HCT116 (cell line): ENCODE measurements at regions of chr17 and their contacts with region 1.

Region 1: GRCh38 chr17:6843241-6843880 is 11.8 kb upstream of the TEKT1 start:
- DNase-seq: peak; percentile 48
- ATAC-seq: peak; percentile 80
- H3K4me3 ChIP-seq: no peak overlapping the region
- H3K27ac ChIP-seq: no peak overlapping the region
- H3K4me1 ChIP-seq: 0 out of 4 replicates have a peak, but pooled peaks cover 0 to 3% of the 10 kb centered on the region in 2 experiments
- H3K27me3 ChIP-seq: no peaks in the 10 kb centered on the region
- CTCF ChIP-seq: peak; percentile 24 to 83 (median 58); a peak in 5 of 6 replicates
- POLR2A ChIP-seq: no peak
- RAD21 ChIP-seq: peak; percentile 80

Region 2: DNA sequence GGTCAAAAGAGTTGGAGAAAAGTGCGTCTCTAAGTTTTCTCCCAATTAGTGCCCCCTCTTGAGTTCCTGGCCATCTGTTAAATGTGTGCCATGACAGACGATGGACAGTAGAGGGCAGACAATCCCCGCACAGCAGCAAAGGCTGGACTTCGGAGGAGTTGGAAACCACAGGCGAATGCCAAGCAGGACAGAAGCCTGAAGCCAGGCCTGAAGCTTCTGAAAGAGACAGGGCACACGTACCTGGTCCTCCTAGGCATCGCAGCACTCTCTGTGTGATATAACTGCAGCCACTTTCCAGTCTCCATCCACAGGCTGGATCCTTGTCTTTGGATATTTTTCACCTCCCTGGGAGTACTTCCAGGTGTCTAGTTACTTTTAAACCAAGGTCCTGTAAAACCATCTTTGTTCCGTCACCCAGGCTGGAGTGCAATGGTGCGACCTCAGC is 177.3 kb before region 1 on chr17:
- CTCF ChIA-PET with region 1: interaction called, 21 read pairs
- POLR2A ChIA-PET with region 1: interaction called, 8 read pairs
- RAD21 ChIA-PET with region 1: no interaction called
- intact Hi-C with region 1: loop called (anchors 1 kb)
- DNase-seq: peak; percentile 81
- ATAC-seq: peak; percentile 82
- H3K4me3 ChIP-seq: no peak overlapping the region
- H3K27ac ChIP-seq: no peak overlapping the region
- H3K4me1 ChIP-seq: peaks cover 18 to 41% of the 10 kb centered on the region in 2 experiments
- H3K27me3 ChIP-seq: no peaks in the 10 kb centered on the region; the same call in 1 of the 2 replicates
- CTCF ChIP-seq: peak; percentile 94 to 95 (median 95)
- POLR2A ChIP-seq: no peak
- RAD21 ChIP-seq: peak; percentile 99

Region 3: GRCh38 chr17:6853764-6854442 is 10.5 kb after region 1 on chr17:
- CTCF ChIA-PET with region 1: interaction called, 39 read pairs
- POLR2A ChIA-PET with region 1: interaction called, 4 read pairs
- RAD21 ChIA-PET with region 1: no interaction called
- intact Hi-C with region 1: no loop called
- DNase-seq: peak; percentile 68
- ATAC-seq: peak; percentile 97
- H3K4me3 ChIP-seq: peak overlapping the region; percentile 74 to 89
- H3K27ac ChIP-seq: peak overlapping the region; percentile 81
- H3K4me1 ChIP-seq: peaks cover 7 to 19% of the 10 kb centered on the region in 2 experiments; a peak in 3 of 4 replicates
- H3K27me3 ChIP-seq: no peaks in the 10 kb centered on the region
- CTCF ChIP-seq: peak; percentile 40 to 79 (median 69); a peak in 5 of 6 replicates
- POLR2A ChIP-seq: peak; percentile 40
- RAD21 ChIP-seq: no peak

Region 4: DNA sequence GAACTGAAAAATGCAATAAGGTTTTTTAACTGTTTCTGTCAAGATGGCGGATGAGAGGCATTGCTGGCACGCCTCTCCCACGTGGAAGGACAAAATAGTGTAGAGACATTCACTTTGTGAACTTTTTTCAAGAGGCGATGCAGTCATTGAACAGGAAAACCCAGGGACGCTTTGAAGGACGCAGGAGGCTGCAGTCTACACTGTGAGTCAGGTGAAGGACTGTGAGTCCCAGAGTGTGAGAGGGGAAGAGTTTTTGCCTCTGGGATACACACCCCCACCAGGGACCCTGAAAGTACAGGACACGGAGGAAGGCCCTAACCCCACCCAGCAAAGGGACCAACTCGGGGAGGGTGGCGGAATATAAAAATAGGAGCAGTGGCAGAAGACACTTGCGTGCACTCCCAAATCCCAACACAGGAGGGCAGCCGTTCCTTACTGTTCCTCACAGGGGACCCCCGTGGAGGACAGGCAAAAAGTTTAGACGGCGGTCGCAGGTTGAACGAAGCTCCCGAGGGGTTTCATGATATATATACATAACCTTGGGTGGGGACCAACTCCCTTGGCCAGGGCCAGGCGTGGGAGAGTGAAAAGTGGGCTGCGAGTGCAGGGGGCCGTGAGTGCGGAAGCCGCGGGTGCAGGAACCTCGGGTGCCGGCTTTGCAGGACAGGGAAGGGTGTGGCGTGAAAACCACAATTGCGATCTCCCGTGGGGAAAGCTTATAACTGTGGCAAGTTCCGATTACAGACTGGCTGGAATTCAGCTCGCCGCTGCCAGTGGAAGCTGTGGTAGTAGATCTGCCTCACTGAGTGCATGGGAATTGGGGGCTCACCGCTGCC is 70.5 kb after region 1 on chr17:
- CTCF ChIA-PET with region 1: interaction called, 3 read pairs
- POLR2A ChIA-PET with region 1: no interaction called
- RAD21 ChIA-PET with region 1: no interaction called
- intact Hi-C with region 1: loop called (anchors 5 kb)
- DNase-seq: no peak
- ATAC-seq: peak; percentile 64
- H3K4me3 ChIP-seq: no peak overlapping the region
- H3K27ac ChIP-seq: no peak overlapping the region
- H3K4me1 ChIP-seq: no peaks in the 10 kb centered on the region
- H3K27me3 ChIP-seq: no peaks in the 10 kb centered on the region
- CTCF ChIP-seq: peak; percentile 19 to 58 (median 35); a peak in 4 of 6 replicates
- POLR2A ChIP-seq: no peak
- RAD21 ChIP-seq: peak; percentile 46

Region 5: DNA sequence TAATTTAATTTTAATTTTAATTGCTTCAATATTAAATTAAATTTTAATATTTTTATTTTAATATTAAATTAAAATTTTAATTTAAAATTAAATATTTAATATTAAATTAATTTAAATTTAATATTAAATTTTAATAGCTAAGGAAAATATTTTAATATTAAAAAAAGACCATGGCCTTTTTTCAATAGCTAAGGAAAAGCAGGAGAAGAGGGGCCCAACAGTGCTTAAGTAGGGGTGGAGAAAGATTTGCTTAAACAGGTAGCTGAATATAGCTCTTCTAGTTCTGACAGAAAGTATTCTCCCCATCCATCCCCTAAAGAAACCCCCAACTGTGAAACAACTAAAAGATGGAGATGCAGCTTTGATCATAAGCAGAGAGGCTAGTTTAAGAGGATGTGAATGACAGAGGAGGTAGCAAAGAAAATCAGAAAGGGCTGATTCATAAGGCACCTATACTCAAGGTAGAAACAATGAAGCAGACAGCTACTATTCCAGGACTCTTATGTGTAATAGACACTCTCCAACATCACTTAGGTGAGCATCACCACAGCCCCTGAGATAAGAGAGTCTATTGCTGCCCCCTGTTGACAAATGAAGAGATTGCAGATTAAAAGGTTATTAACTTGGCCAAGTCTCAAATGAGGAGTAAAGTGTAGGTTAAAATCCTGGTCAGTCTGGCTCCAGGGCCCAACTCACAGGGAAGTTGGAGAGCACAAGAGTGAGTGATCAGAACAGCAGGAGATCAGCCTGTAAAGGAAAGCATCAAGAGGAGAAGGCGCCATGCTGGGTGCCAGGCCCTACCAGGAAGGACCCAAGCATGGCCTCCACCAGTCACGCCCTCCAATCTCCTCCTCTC is 161.3 kb after region 1 on chr17:
- CTCF ChIA-PET with region 1: interaction called, 84 read pairs
- POLR2A ChIA-PET with region 1: interaction called, 7 read pairs
- RAD21 ChIA-PET with region 1: interaction called, 3 to 7 read pairs
- intact Hi-C with region 1: loop called (anchors 2 kb)
- DNase-seq: peak; percentile 56
- ATAC-seq: peak; percentile 87
- H3K4me3 ChIP-seq: no peak overlapping the region
- H3K27ac ChIP-seq: no peak overlapping the region
- H3K4me1 ChIP-seq: no peaks in the 10 kb centered on the region
- H3K27me3 ChIP-seq: no peaks in the 10 kb centered on the region
- CTCF ChIP-seq: peak; percentile 66 to 83 (median 82)
- POLR2A ChIP-seq: no peak
- RAD21 ChIP-seq: peak; percentile 91

Region 6: DNA sequence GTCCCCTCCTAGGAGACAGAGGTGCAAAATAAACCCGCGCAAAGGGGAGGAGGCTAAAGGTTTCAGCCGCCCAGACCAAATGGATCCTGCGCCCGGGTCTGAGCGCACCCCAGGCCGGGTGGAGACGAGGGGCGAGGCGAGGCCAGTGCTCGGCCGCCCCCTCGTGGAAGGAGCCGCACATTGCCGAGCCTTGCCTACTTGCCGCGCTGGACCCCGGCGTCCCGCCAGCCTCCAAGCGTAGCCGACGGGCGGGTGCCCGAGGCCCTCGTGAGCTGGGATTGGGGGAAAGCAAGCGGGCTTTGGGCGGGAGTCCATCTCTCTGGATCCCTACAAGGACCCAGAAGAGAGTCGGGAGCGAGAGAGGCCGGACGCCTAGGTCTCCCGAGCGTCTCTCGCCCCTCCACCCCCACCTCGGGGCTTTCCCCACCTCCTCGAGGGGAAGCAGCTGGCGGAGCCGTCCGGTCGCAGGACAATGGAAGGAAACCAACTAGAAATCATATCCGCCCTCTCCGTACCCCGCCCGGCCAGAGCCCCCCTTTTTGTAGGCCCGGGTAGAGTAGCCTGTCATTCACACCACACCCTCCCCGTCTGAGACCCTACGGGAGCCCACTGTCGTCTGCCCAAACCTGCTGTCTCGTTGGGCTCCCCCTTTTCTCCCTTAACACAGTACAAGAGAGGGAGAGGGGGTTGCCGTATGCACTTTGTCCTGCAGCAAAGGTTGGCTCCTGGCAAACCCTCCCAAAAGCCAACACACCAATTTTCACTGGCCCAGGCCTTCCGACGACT is 178.8 kb after region 1 on chr17:
- CTCF ChIA-PET with region 1: interaction called, 11 read pairs
- POLR2A ChIA-PET with region 1: no interaction called
- RAD21 ChIA-PET with region 1: interaction called in 1 of 2 experiments, 4 read pairs
- intact Hi-C with region 1: no loop called
- DNase-seq: no peak
- ATAC-seq: peak; percentile 79
- H3K4me3 ChIP-seq: peak overlapping the region; percentile 11 to 38; a peak in 3 of 4 replicates
- H3K27ac ChIP-seq: no peak overlapping the region
- H3K4me1 ChIP-seq: peaks cover 6 to 44% of the 10 kb centered on the region in 2 experiments; a peak in 3 of 4 replicates
- H3K27me3 ChIP-seq: no peaks in the 10 kb centered on the region
- CTCF ChIP-seq: peak; percentile 55 to 90 (median 88); a peak in 5 of 6 replicates
- POLR2A ChIP-seq: no peak
- RAD21 ChIP-seq: peak; percentile 85